Esophagus muscularis mucosa (tissue), 4 donors: ENCODE measurements at regions of chr15 and their contacts with region 1.

Region 1: DNA sequence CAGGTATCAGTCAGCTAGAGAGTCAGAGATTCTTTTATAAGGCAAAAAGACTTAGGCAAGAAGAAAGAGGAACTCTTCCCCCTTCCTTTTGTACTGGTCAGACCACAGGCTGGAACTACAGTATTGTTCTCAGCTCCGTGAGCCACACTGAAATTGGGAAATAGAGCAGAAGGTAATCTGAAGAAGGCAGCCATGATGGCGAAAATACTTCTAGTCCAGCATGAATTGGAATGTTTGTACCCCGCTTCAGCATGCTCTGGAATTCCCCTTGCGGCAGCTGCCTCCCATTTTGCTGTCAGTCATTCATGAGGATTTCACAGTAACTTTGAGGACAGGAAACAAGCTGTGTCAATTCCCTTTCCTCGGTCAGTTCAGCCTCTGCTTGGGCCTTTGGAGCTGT is 96.2 kb downstream of the CORO2B start:
- DNase-seq: no peak
- H3K4me3 ChIP-seq: no peak overlapping the region
- H3K27ac ChIP-seq: no peak overlapping the region
- H3K4me1 ChIP-seq: peaks cover 8 to 13% (median 9%) of the 10 kb centered on the region in 4 donors
- H3K27me3 ChIP-seq: peaks cover 0 to 19% (median 0%) of the 10 kb centered on the region in 4 donors
- CTCF ChIP-seq: no peak
- EP300 ChIP-seq: no peak
- POLR2A ChIP-seq: no peak

Region 2: DNA sequence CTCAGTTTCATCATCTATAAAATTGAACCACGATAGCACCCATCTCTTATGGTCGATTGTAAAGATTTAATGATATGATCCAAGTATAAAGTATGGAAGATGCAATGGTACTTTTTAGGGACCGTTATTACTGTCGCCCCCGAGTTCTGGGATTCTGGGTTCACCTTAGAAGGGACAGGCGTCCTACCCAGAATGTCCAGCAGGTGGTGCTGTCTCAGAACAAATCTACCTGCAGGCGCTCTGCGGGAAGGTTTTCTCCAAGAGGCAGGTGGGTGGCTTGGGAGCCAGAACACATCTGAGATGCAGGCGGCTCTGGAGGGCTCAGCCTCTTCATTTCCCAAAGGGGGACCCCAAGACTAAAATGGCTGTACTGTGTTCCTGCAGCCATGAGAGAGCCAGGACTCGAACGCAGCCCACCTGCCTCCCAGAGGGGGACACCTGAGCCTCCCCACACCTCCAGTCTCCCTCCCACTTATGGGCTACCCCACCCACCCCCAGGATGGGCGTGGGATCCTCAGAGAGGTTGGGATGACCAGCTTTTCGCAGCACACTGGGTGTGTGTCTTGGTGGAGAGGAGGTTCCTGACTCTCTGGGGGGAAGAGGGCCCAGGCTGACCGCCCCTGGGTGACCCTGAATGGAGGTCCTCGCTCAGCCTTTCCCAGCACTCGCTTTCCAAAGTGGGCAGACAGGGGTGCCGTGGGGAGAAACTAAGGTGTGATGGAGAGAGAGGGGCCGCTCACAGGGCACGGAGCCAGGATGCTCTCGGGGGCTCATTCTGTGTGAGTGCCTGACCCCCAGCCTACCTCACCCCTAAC is 124.3 kb before region 1 on chr15:
- intact Hi-C with region 1: loop called (anchors 1 kb)
- DNase-seq: peak; percentile 92
- H3K4me3 ChIP-seq: no peak overlapping the region
- H3K27ac ChIP-seq: no peak overlapping the region
- H3K4me1 ChIP-seq: no peaks in the 10 kb centered on the region
- H3K27me3 ChIP-seq: peaks cover 0 to 50% (median 0%) of the 10 kb centered on the region in 4 donors
- CTCF ChIP-seq: peak; percentile 82 to 99 (median 91)
- EP300 ChIP-seq: no peak
- POLR2A ChIP-seq: no peak

Region 3: GRCh38 chr15:68578174-68578979 is 96.6 kb before region 1 on chr15:
- intact Hi-C with region 1: loop called (anchors 1 kb)
- DNase-seq: no peak
- H3K4me3 ChIP-seq: peak overlapping the region; percentile 66 to 83 (median 70)
- H3K27ac ChIP-seq: peak overlapping the region; percentile 74 to 84 (median 78)
- H3K4me1 ChIP-seq: peaks cover 19 to 34% (median 26%) of the 10 kb centered on the region in 4 donors
- H3K27me3 ChIP-seq: peaks cover 0 to 66% (median 24%) of the 10 kb centered on the region in 4 donors
- CTCF ChIP-seq: peak; percentile 44 to 52 (median 46)
- EP300 ChIP-seq: no peak
- POLR2A ChIP-seq: no peak

Region 4: GRCh38 chr15:68614286-68615035 is 60.5 kb before region 1 on chr15:
- intact Hi-C with region 1: no loop called
- DNase-seq: no peak
- H3K4me3 ChIP-seq: no peak overlapping the region
- H3K27ac ChIP-seq: peak overlapping the region; percentile 22 to 76 (median 52)
- H3K4me1 ChIP-seq: peaks cover 16 to 62% (median 40%) of the 10 kb centered on the region in 4 donors
- H3K27me3 ChIP-seq: peaks cover 0 to 10% (median 0%) of the 10 kb centered on the region in 4 donors
- CTCF ChIP-seq: no peak
- EP300 ChIP-seq: no peak
- POLR2A ChIP-seq: no peak

Region 5: DNA sequence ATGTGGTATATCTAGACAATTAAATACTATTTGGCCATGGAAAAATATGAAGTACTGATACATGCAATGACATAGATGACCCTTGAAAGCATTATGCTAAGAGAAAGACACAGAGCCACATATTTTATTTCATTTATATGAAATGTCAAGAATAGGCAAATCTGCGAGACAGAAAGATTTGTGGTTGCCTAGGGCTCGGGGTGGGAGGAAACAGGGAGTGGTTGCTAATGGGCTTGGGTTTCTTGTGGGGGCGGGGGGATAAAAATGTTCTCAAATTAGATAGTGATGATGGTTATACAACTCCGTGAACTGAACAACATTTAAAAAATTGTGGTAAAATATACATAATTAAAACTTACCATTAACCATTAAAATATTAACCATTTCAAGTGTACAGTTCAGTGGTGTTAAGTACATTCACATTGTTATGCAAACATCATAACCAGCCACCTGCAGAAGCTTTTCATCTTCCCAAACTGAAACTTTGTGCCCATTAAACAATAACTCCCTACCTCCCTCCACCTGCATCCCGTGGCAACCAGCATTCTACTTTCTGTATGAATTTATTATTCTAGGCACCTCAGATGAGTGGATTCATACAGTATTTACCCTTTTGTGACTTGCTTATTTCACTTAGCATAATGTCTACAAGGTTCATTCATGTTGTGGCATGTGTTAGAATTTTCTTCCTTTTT is 170.0 kb after region 1 on chr15:
- intact Hi-C with region 1: no loop called
- DNase-seq: no peak
- H3K4me3 ChIP-seq: no peak overlapping the region
- H3K27ac ChIP-seq: no peak overlapping the region
- H3K4me1 ChIP-seq: peaks cover 0 to 9% (median 9%) of the 10 kb centered on the region in 4 donors
- H3K27me3 ChIP-seq: peaks cover 0 to 71% (median 29%) of the 10 kb centered on the region in 4 donors
- CTCF ChIP-seq: no peak
- EP300 ChIP-seq: no peak
- POLR2A ChIP-seq: no peak